Mammary epithelial cell (primary cell): ENCODE measurements at regions of chr17 and their contacts with region 1.

Region 1: DNA sequence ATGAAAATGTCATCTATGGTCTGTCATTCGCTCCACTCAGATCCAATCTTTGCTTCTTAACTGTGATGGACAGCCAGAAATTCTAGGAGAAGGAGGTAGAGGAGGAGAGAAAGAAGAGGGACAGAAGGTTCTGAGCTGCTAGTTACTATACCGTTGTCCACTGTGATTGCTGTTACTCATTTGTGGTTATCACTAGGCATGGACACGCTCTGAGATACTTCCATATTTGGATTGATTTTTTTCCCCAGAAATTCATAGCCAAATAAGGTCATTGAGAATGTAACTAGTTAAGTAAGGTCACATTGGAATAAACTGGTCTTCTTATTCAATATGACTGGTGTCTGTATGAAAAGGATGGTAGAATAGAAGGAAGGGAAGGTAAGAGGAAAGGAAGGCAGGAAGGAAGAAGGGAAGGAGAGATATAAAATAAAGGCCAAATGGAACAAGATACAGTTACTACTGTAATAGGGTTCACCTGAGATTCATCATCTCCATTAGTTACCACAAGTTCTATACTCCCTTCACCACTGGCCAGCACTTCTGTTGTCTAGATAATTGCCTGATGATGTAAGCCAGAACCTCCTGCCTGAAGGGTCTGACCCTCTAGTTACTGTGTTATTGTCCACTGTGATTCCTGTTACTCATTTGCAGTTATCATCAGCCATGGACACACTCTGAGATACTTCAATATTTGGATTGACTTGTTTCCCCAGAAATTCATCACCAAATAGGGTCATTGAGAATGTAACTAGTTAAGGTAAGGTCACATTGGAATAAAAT is 2.9 kb downstream of the KRTAP9-7 start:
- DNase-seq: no peak
- H3K4me3 ChIP-seq: no peak overlapping the region
- H3K27ac ChIP-seq: no peak overlapping the region
- H3K4me1 ChIP-seq: no peaks in the 10 kb centered on the region
- H3K27me3 ChIP-seq: no peaks in the 10 kb centered on the region
- CTCF ChIP-seq: no peak

Region 2: GRCh38 chr17:41263212-41263611 is 15.2 kb before region 1 on chr17:
- CTCF ChIA-PET with region 1: no interaction called
- dilution Hi-C with region 1: no loop called
- in situ Hi-C with region 1: no loop called
- intact Hi-C with region 1: loop called (anchors 1 kb)
- DNase-seq: no peak
- H3K4me3 ChIP-seq: no peak overlapping the region
- H3K27ac ChIP-seq: no peak overlapping the region
- H3K4me1 ChIP-seq: no peaks in the 10 kb centered on the region
- H3K27me3 ChIP-seq: peaks cover 2% of the 10 kb centered on the region
- CTCF ChIP-seq: no peak

Region 3: DNA sequence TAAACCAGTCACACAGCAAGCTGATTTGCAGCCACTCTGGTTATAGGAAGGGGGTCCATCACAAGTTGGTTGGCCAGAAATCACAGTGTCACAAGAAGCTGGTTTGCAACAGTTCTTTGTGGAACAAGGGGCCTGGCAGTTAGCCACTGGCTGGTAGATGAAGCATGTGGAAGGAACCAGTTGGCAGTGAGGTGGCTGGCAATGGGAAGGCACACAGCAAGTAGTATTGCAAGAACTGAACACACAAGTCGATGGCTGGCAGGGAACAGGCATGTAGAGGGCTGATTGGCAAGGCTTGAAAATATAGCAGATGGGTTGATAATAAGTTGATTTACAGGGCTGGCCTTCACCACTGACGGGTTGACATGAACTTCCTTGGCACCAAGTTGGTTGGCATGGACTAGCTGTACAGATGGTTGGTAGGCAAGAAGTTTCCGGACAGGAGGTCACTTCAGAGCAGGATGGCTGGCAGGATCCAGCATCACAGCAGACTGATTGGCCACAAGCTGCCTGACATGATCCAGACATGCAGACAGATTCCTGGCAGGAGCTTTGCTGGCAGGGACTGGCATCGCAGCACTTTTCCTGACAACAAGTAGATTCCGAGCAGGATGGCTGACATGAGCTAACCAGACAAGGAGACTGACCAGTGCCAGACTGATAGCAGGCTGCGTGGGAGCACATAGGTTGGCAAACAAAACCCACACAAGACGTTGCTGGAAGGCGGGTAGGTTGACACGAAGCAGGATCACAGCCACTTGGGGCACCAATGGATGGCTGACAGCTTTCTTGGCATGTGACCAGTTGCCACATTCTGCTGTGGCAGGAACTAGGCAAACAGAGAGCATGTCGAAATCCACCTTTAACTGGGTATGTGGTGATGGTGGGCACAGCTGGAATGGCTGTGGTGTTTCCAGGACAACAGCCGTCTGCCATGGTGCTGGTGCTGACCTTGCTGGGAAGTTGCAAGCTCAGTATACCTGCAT is 23.8 kb after region 1 on chr17 and contains the start of gene KRTAP29-1:
- CTCF ChIA-PET with region 1: no interaction called
- dilution Hi-C with region 1: no loop called
- in situ Hi-C with region 1: no loop called
- intact Hi-C with region 1: no loop called
- DNase-seq: no peak
- H3K4me3 ChIP-seq: no peak within 1 kb of the TSS
- H3K27ac ChIP-seq: peak within 1 kb of the TSS; percentile 73
- H3K4me1 ChIP-seq: peaks cover 27% of the 10 kb centered on the region
- H3K27me3 ChIP-seq: no peaks in the 10 kb centered on the region
- CTCF ChIP-seq: no peak
- total RNA-seq, gene KRTAP29-1: 0.17 TPM in 1 of 2 donors, not detected in the other